Right ventricle myocardium superior (tissue), 1 donor: ENCODE measurements at regions of chr14 and their contacts with region 1.

Region 1: DNA sequence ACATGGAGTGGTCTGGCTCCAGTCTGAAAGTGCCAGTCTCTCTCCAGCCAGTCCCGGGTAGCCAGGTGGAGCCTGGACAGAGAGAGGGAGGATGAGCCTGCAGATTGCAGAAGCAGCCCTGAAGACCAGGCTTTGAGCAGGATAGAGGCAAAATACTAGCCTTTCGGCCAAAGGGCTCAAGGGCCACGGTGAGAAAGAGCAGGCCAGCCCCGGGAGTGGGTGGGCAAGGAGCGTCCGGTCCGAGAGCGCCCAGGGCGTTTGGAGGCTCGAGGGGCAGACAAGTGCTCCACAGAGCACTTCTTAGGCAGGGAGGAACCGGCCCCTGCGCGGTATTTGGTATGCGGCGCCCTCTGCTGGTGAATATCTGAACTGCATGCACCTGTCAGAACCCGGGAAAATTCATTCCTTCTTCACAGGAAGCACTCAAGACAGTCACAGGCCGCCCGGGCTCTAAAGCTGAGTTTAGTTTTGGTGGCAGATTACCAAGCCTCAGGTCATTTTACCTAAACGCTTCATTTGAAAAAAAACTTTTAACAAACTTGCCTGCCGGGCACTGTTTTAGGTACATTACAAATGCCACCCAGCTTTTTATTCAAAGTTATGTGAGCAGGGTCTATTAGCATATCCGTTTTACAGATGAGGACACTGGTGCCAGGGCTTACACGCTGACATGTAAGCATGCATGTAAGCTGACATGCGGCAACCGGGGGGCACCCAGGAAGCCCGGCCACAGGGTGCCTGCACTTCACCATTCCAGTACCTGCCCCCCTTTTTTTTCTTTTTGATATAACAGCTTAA is 21.0 kb upstream of the PSMC1 start:
- DNase-seq: peak; percentile 79
- ATAC-seq: peak; percentile 90

Region 2: DNA sequence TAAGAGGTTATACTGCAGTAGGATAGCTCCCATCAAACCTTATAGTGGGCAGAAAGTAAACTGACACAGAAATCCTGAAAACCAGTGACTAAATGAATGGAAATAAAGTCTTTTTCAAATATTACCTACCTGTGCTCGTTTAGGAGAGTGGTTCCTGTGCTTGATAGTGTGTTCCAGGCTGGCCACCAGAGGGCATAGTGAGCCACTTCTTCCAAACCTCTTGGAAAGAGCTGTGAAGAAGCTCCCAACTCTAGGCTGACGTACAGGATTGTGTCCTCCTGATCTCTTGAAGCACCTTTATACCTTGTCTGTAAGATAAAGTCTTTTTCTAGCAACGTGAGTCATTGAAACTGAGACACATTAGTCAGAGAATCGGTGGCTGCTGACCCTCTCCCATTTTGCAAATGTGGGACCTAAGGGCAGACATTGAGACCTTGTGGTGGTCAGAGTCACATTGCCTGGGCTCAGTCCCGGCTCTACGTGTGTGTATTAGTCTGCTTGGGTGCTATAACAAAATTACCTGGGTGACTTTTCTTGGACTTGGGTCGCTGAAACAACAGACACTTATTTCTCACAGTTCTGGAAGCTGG is 262.0 kb before region 1 on chr14:
- intact Hi-C with region 1: loop called (anchors 2 kb)
- DNase-seq: peak; percentile 71
- ATAC-seq: peak; percentile 93

Region 3: GRCh38 chr14:90049390-90049789 is 186.0 kb before region 1 on chr14:
- intact Hi-C with region 1: no loop called
- DNase-seq: no peak
- ATAC-seq: no peak

Region 4: GRCh38 chr14:90301668-90302090 is 66.3 kb after region 1 on chr14:
- intact Hi-C with region 1: no loop called
- DNase-seq: no peak
- ATAC-seq: peak; percentile 75